Caco-2 (cell line): ENCODE measurements at regions of chr17 and their contacts with region 1.

Region 1: GRCh38 chr17:20171741-20172365 is 162.7 kb downstream of the SPECC1 start:
- DNase-seq: peak; percentile 78 to 84
- H3K4me3 ChIP-seq: no peak overlapping the region
- H3K4me3 Mint-ChIP-seq: peak overlapping the region; percentile 56
- H3K27ac Mint-ChIP-seq: peak overlapping the region; percentile 93
- H3K4me1 ChIP-seq: peaks cover 64% of the 10 kb centered on the region
- H3K4me1 Mint-ChIP-seq: peaks cover 67% of the 10 kb centered on the region
- H3K27me3 ChIP-seq: no peaks in the 10 kb centered on the region
- H3K27me3 Mint-ChIP-seq: no peaks in the 10 kb centered on the region
- CTCF ChIP-seq: no peak

Region 2: GRCh38 chr17:20155258-20156195 is 16.3 kb before region 1 on chr17:
- CTCF ChIA-PET with region 1: no interaction called
- POLR2A ChIA-PET with region 1: interaction called, 18 read pairs
- intact Hi-C with region 1: loop called (anchors 1 kb)
- DNase-seq: peak; percentile 100
- H3K4me3 ChIP-seq: peak overlapping the region; percentile 93
- H3K4me3 Mint-ChIP-seq: no peak overlapping the region
- H3K27ac Mint-ChIP-seq: no peak overlapping the region
- H3K4me1 ChIP-seq: no peaks in the 10 kb centered on the region; the same call in 1 of the 2 replicates
- H3K4me1 Mint-ChIP-seq: peaks cover 11% of the 10 kb centered on the region
- H3K27me3 ChIP-seq: no peaks in the 10 kb centered on the region
- H3K27me3 Mint-ChIP-seq: no peaks in the 10 kb centered on the region
- CTCF ChIP-seq: no peak

Region 3: GRCh38 chr17:20226814-20227482 is 55.1 kb after region 1 on chr17:
- CTCF ChIA-PET with region 1: no interaction called
- POLR2A ChIA-PET with region 1: no interaction called
- intact Hi-C with region 1: loop called (anchors 2 kb)
- DNase-seq: peak; percentile 74 to 83
- H3K4me3 ChIP-seq: no peak overlapping the region
- H3K4me3 Mint-ChIP-seq: no peak overlapping the region
- H3K27ac Mint-ChIP-seq: peak overlapping the region; percentile 50
- H3K4me1 ChIP-seq: peaks cover 25% of the 10 kb centered on the region
- H3K4me1 Mint-ChIP-seq: peaks cover 29% of the 10 kb centered on the region
- H3K27me3 ChIP-seq: no peaks in the 10 kb centered on the region
- H3K27me3 Mint-ChIP-seq: no peaks in the 10 kb centered on the region
- CTCF ChIP-seq: peak; percentile 83 to 89

Region 4: GRCh38 chr17:20981046-20981920 is 809.4 kb after region 1 on chr17:
- CTCF ChIA-PET with region 1: no interaction called
- POLR2A ChIA-PET with region 1: interaction called, 10 read pairs
- intact Hi-C with region 1: no loop called
- DNase-seq: no peak
- H3K4me3 ChIP-seq: no peak overlapping the region
- H3K4me3 Mint-ChIP-seq: no peak overlapping the region
- H3K27ac Mint-ChIP-seq: no peak overlapping the region
- H3K4me1 ChIP-seq: peaks cover 16% of the 10 kb centered on the region
- H3K4me1 Mint-ChIP-seq: peaks cover 12% of the 10 kb centered on the region
- H3K27me3 ChIP-seq: no peaks in the 10 kb centered on the region
- H3K27me3 Mint-ChIP-seq: no peaks in the 10 kb centered on the region
- CTCF ChIP-seq: no peak